Activated naive CD4-positive, alpha-beta T cell treated with anti-CD3 and anti-CD28 coated beads for 36 hours (primary cell): ENCODE measurements at regions of chrX and their contacts with region 1.

Region 1: DNA sequence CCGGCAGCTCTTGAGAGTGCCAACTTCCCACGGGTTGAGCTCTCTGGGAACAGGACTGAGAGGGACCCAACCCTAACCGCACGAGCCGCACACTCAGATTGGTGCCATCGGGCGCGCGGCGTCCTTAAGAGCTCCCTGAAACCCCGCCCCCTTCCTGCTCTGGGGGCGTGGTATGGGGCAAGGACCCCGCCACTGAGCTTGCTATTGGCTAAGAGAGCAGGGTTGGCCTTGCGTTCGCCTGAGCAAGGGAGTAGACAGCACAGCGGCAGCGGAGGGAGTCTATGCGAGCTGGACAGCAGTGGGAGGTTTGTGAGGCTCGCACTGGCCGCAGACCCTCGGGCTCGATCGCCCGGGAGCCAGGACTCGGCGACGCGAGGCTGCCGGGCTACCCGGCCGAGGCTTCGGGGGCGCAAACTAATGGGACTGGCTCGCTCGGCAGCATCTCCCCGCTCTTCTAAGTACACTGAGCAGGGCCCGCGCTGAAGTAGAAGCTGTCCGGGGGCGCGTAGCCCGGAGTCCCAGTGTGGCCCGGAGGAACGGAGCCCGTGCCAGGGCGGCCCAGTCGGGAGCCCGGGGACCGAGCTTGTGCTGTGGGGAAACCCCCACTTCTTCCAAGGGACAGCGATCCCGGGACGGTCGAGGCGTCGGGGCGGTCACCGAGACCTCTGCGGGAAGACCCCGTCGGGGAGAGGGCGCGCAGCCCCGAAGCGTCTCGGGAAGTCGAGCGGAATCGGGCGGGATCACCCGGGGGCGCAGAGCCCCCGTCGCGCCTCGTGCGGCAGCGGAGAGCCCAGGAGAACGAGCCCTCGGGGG is at the start of gene EFNB1:
- DNase-seq: peak; percentile 86
- H3K4me3 Mint-ChIP-seq: peak within 1 kb of the TSS; percentile 81
- H3K27ac Mint-ChIP-seq: no peak within 1 kb of the TSS
- H3K4me1 Mint-ChIP-seq: peaks cover 14% of the 10 kb centered on the region
- H3K27me3 Mint-ChIP-seq: no peaks in the 10 kb centered on the region
- total RNA-seq, gene EFNB1: 3.9 to 4.2 TPM

Region 2: DNA sequence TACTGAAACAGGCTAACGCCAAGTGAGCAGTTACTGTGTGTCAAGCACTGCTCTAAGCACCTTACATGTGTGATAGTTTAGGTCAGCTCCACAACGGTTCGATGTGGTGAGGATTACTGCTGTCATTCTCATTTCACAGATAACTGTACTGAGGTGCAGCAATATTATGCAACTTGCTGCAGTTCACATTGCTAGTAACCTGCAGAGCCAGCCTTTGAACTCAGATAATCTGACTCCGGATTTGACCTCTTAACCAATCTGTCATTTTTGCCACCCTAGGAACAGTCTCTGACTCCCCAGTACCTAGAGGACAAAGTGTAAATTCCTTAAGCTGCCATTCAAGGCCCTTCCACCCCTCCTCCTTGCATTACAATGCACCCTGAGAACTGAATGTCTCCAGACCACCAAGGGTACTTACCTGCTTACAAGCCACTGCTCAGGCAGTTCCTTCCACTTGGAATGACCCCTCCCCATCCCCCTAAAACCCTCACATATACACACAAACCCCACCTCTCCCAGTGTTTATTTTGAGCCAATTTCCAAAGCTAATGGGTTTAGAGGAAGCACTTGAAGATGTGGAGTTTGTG is 24.8 kb after region 1 on chrX:
- CTCF ChIA-PET with region 1: no interaction called
- intact Hi-C with region 1: no loop called
- DNase-seq: no peak
- H3K4me3 Mint-ChIP-seq: no peak overlapping the region
- H3K27ac Mint-ChIP-seq: no peak overlapping the region
- H3K4me1 Mint-ChIP-seq: peaks cover 2% of the 10 kb centered on the region
- H3K27me3 Mint-ChIP-seq: no peaks in the 10 kb centered on the region

Region 3: GRCh38 chrX:68894513-68895340 is 65.8 kb after region 1 on chrX:
- CTCF ChIA-PET with region 1: interaction called, 3 read pairs
- intact Hi-C with region 1: loop called (anchors 10 kb)
- DNase-seq: peak; percentile 37
- H3K4me3 Mint-ChIP-seq: peak overlapping the region; percentile 24
- H3K27ac Mint-ChIP-seq: no peak overlapping the region
- H3K4me1 Mint-ChIP-seq: peaks cover 4% of the 10 kb centered on the region
- H3K27me3 Mint-ChIP-seq: no peaks in the 10 kb centered on the region

Region 4: GRCh38 chrX:69093960-69094871 is 265.3 kb after region 1 on chrX:
- CTCF ChIA-PET with region 1: interaction called, 3 read pairs
- intact Hi-C with region 1: loop called (anchors 10 kb)
- DNase-seq: peak; percentile 45
- H3K4me3 Mint-ChIP-seq: no peak overlapping the region
- H3K27ac Mint-ChIP-seq: no peak overlapping the region
- H3K4me1 Mint-ChIP-seq: no peaks in the 10 kb centered on the region
- H3K27me3 Mint-ChIP-seq: no peaks in the 10 kb centered on the region

Region 5: GRCh38 chrX:69222103-69223090 is 393.5 kb after region 1 on chrX:
- CTCF ChIA-PET with region 1: interaction called, 48 read pairs
- intact Hi-C with region 1: loop called (anchors 1 kb)
- DNase-seq: peak; percentile 80
- H3K4me3 Mint-ChIP-seq: no peak overlapping the region
- H3K27ac Mint-ChIP-seq: no peak overlapping the region
- H3K4me1 Mint-ChIP-seq: no peaks in the 10 kb centered on the region
- H3K27me3 Mint-ChIP-seq: no peaks in the 10 kb centered on the region

Region 6: DNA sequence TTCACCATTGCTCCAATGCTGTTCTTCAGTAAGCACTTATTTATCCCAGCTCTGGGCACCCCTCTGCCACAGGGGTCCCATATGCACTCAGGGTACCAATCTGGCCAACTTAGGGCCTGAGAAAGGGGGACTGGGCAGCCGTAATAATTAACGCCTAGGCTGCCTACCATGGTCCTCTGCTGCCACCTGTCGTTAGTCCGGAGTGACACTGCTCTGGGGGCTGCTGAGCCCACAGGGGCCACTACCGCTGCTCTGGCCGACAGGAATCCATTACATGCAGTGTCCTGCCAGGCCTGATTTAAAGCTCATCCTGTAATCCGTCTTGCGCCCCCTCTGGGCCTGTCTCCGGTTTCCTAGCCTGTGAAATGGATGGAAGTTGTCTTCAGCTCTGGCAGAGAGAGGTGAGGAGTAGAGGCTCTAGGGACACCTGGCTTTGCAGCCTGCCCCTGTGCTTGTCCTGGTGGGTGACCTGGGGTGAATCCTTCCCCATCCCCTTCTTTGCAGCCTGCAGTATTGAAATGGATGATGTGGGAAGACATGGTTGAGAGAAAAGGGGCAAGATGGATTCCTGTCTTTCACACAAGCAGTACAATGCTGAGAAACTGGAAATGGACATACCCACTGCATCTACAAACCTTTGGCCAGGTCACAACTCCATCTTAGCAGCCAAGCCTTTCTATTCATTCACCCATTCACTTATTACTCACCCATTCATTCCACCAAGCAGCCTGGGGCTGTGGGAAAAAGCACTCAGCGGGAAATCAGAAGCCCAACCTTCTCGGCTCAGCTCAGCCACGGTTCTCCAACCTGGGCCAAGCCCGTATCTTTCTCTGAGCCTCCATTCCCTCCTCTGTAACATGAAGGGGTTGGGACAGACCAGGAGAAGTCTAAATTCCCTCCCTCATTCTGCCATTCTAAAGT is 558.9 kb after region 1 on chrX:
- CTCF ChIA-PET with region 1: interaction called, 4 read pairs
- intact Hi-C with region 1: loop called (anchors 1 kb)
- DNase-seq: peak; percentile 39
- H3K4me3 Mint-ChIP-seq: no peak overlapping the region
- H3K27ac Mint-ChIP-seq: no peak overlapping the region
- H3K4me1 Mint-ChIP-seq: no peaks in the 10 kb centered on the region
- H3K27me3 Mint-ChIP-seq: no peaks in the 10 kb centered on the region